Caco-2 (cell line): ENCODE measurements at regions of chr5 and their contacts with region 1.

Region 1: DNA sequence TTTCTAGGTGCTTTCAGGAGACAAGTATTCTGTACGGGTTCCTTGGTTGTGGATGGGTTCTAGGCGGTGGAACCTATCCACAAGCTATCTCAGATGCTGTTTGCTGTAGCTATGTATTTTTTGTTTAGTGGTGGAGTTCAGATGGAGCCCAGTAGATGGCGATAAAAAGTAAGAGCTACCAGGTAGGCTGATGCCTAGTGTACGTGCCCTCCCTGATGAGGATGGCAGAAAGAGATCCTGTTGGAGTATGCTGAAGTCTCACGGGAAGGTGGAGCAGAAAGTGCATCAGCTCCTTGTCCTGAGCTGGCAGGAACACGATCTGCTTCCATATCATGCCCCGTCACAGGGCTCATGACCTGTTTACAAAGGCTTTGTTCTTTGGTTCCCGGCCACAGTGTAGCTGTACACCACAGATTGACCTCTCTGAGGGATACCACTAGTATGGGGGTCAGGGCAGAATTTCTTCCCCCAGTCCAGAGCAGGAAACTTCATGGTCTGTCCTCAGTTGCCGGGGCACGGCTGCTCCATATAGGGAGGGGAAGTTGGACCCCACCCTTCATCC is 12.6 kb upstream of the UGT3A2 start:
- DNase-seq: peak; percentile 68 to 71
- H3K4me3 ChIP-seq: no peak overlapping the region
- H3K4me3 Mint-ChIP-seq: no peak overlapping the region
- H3K27ac Mint-ChIP-seq: no peak overlapping the region
- H3K4me1 ChIP-seq: 0 out of 2 replicates have a peak, but pooled peaks cover 3% of the 10 kb centered on the region
- H3K4me1 Mint-ChIP-seq: no peaks in the 10 kb centered on the region
- H3K27me3 ChIP-seq: no peaks in the 10 kb centered on the region; the same call in 1 of the 2 replicates
- H3K27me3 Mint-ChIP-seq: peaks cover 11% of the 10 kb centered on the region
- CTCF ChIP-seq: peak; percentile 67 to 71

Region 2: DNA sequence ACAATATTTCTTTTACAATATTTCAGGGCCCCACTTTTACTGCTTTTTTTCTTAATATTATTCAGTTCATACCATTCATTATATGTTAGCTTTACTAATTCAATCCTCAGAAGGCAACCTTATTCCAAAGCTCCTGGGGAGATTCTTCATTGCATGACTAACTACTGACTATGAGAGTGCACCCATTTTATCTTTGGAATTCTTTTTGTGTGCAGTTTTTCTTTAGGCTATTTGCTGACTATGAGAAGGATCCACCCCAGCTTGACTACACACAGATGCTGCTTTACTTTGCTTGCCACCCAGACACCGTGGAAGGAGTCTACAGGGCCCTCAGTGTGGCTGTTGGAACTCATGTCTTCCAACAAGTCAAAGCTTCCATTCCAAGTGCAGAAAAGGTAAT is 279.5 kb before region 1 on chr5:
- CTCF ChIA-PET with region 1: no interaction called
- POLR2A ChIA-PET with region 1: no interaction called
- intact Hi-C with region 1: no loop called
- DNase-seq: no peak
- H3K4me3 ChIP-seq: no peak overlapping the region
- H3K4me3 Mint-ChIP-seq: no peak overlapping the region
- H3K27ac Mint-ChIP-seq: no peak overlapping the region
- H3K4me1 ChIP-seq: no peaks in the 10 kb centered on the region
- H3K4me1 Mint-ChIP-seq: no peaks in the 10 kb centered on the region
- H3K27me3 ChIP-seq: no peaks in the 10 kb centered on the region
- H3K27me3 Mint-ChIP-seq: peaks cover 3% of the 10 kb centered on the region
- CTCF ChIP-seq: no peak

Region 3: DNA sequence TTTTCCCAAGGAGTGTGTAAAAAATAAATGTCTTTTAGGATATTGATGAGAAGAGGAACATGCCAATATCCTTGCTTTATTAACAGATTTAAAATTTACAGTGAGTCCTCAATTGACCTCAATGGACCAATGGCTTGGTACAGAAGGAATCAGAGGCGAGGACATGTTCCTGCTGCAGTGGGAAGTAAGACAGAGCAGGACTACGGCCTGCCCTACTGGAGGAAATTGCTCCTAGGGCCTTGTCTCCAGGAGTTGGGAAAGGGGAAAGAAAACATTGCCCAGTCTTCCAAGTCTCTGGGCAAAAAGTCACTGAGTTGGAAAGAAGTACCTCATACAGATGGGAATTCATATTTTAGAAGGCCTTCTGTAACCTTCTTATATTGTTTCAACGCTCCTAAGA is 20.5 kb after region 1 on chr5:
- CTCF ChIA-PET with region 1: no interaction called
- POLR2A ChIA-PET with region 1: no interaction called
- intact Hi-C with region 1: no loop called
- DNase-seq: no peak
- H3K4me3 ChIP-seq: no peak overlapping the region
- H3K4me3 Mint-ChIP-seq: no peak overlapping the region
- H3K27ac Mint-ChIP-seq: no peak overlapping the region
- H3K4me1 ChIP-seq: no peaks in the 10 kb centered on the region
- H3K4me1 Mint-ChIP-seq: no peaks in the 10 kb centered on the region
- H3K27me3 ChIP-seq: no peaks in the 10 kb centered on the region
- H3K27me3 Mint-ChIP-seq: no peaks in the 10 kb centered on the region
- CTCF ChIP-seq: no peak

Region 4: DNA sequence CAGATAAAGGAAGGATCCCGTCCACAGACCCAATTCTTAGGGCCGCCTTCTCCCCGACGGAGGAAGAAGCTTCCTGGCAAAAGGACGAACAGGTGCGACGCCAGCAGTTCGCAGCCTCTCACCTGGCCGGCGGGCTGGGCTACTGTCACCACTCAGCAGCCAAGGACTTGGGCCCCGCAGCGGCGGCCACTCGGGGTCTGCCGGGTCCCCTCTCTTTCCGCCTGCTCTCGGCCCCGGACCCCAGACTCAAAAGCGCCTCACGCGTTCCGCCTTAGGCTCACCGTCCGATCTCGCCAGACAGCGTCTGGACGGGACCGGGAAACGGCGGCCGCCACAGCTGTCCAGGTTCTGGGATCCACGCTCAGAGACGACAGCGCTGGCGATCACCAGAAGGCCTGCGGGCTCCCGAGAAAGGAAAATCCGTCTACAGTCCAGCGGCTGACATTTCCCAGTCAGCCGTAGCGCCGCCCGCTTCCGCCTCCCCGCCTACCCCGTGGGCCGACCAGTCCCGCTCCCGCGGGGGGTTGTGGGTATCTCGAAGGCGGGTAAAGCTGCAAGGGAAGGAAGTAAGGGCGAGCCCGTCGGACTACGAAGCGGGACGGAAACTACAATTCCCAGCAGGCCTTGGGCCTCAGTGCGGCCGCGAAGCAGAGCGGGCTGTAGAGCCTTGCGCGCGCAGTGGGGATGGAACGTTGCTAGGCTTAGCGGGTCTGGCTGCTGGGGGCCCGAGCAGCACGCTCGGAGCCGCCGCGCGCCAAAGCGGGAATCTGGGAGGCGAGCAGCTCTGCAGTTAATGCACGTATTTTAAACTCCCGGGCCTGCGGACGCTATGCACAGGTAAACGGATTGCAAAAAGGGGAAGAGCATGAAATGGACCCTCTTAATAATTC is 72.4 kb after region 1 on chr5 and contains the starts of genes LMBRD2 and SKP2:
- CTCF ChIA-PET with region 1: interaction called, 36 read pairs
- POLR2A ChIA-PET with region 1: interaction called, 6 read pairs
- intact Hi-C with region 1: loop called (anchors 2 kb)
- DNase-seq: peak; percentile 98
- H3K4me3 ChIP-seq: peak within 1 kb of the TSS; percentile 98
- H3K4me3 Mint-ChIP-seq: peak within 1 kb of the TSS; percentile 75
- H3K27ac Mint-ChIP-seq: peak within 1 kb of the TSS; percentile 85
- H3K4me1 ChIP-seq: peaks cover 59% of the 10 kb centered on the region
- H3K4me1 Mint-ChIP-seq: peaks cover 54% of the 10 kb centered on the region
- H3K27me3 ChIP-seq: no peaks in the 10 kb centered on the region
- H3K27me3 Mint-ChIP-seq: no peaks in the 10 kb centered on the region
- CTCF ChIP-seq: no peak
- total RNA-seq, gene LMBRD2: 11.5 and 15.2 TPM in 2 replicates
- total RNA-seq, gene SKP2: 192 and 230 TPM in 2 replicates

Region 5: GRCh38 chr5:36214434-36214833 is 135.2 kb after region 1 on chr5:
- CTCF ChIA-PET with region 1: no interaction called
- POLR2A ChIA-PET with region 1: no interaction called
- intact Hi-C with region 1: loop called (anchors 1 kb)
- DNase-seq: peak in 1 of 2 experiments; percentile 27
- H3K4me3 ChIP-seq: no peak overlapping the region
- H3K4me3 Mint-ChIP-seq: no peak overlapping the region
- H3K27ac Mint-ChIP-seq: no peak overlapping the region
- H3K4me1 ChIP-seq: no peaks in the 10 kb centered on the region; the same call in 1 of the 2 replicates
- H3K4me1 Mint-ChIP-seq: peaks cover 8% of the 10 kb centered on the region
- H3K27me3 ChIP-seq: no peaks in the 10 kb centered on the region
- H3K27me3 Mint-ChIP-seq: no peaks in the 10 kb centered on the region
- CTCF ChIP-seq: peak in 1 of 2 experiments; percentile 22

Region 6: DNA sequence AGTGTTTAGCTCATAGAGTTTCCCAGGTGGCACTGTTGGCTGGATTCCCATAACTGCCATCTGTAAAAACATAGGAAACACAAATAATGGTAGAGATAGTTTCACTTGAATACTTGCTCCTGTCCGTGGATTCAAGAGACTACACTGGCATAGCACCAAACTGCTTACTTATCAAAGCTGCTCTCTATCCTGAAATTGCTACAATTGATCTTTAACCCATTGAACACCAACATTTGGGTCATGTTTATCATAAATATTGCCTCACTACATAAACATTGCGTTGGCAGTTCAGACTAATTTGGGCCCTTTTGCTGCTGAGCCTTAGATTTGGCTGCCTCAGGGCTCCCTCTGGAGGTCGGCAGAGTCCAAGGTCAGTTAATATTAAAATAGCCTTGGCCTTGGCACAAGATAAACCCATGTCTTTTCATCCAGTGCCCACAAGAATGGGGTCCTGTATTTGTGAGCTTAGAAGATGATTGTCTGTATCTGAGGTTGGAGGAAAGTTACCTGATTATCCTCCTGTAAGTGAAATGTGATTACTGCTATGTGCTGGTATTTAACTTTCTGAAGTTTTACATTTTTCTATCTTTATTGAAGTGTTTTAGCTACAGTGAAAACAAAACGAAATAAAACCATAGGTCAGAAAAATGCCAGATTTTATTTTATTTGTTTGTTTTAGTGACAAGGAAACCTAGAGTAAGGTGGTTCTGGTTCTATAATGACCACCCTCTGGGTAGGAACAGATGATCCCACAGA is 226.5 kb after region 1 on chr5:
- CTCF ChIA-PET with region 1: interaction called, 15 read pairs
- POLR2A ChIA-PET with region 1: no interaction called
- intact Hi-C with region 1: loop called (anchors 1 kb)
- DNase-seq: peak in 1 of 2 experiments; percentile 59
- H3K4me3 ChIP-seq: no peak overlapping the region
- H3K4me3 Mint-ChIP-seq: no peak overlapping the region
- H3K27ac Mint-ChIP-seq: no peak overlapping the region
- H3K4me1 ChIP-seq: peaks cover 19% of the 10 kb centered on the region
- H3K4me1 Mint-ChIP-seq: peaks cover 13% of the 10 kb centered on the region
- H3K27me3 ChIP-seq: no peaks in the 10 kb centered on the region
- H3K27me3 Mint-ChIP-seq: no peaks in the 10 kb centered on the region
- CTCF ChIP-seq: peak; percentile 55 to 72

Region 7: DNA sequence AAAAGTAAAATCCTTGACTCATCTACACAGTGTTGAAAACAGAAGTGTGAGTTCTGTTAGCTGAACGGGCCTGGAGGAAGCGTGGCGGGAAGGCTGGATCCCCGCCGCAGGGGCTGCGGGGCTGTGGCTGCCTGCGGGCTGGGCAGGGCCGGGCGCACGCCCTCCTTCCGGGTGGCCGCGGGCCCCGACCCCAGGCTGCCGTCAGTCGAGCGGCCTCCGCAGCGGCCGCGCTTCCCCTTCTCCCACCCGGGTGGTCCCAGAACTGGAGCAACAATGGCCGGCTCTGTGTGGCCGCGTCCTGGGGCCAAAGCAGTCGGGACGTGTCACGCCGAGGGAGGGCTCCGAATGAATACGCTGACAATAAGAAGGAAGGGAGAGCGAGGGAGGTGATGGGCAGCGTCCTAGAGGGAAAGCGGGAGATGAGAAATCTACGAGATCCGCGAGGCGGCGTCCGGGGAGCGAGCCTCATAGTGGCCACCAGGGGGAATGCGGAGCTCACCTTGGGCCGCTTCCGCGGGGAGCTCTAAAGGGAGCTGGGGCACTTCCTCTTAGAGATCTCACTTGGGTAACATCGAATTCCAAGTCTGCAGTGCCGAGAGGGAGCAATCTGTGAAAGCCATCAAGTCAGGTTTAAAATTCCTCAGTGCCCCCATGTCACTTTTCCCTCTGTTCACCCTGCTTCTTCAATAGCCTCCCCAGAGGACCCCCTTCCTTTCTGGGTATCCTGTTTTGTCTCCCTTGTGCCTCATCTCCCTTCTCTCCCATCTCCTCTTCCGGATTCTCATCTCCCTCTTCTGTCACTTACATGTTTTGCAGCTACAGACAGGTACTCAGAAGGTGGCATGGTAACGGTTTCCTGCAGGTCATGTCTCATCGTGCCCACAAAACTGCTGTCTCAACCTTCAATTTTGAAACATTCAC is 611.0 kb after region 1 on chr5:
- CTCF ChIA-PET with region 1: no interaction called
- POLR2A ChIA-PET with region 1: no interaction called
- intact Hi-C with region 1: loop called (anchors 10 kb)
- DNase-seq: peak; percentile 90 to 91
- H3K4me3 ChIP-seq: peak overlapping the region; percentile 71
- H3K4me3 Mint-ChIP-seq: peak overlapping the region; percentile 75
- H3K27ac Mint-ChIP-seq: peak overlapping the region; percentile 28
- H3K4me1 ChIP-seq: peaks cover 14% of the 10 kb centered on the region; the same call in 1 of the 2 replicates
- H3K4me1 Mint-ChIP-seq: peaks cover 10% of the 10 kb centered on the region
- H3K27me3 ChIP-seq: no peaks in the 10 kb centered on the region
- H3K27me3 Mint-ChIP-seq: no peaks in the 10 kb centered on the region
- CTCF ChIP-seq: peak; percentile 80 to 91